ENCODE measurements at regions of chr14 and their contacts with region 1.

Region 1: GRCh38 chr14:105045710-105046326 is 19.4 kb downstream of the GPR132 start:
- DNase-seq: peak; percentile 81
- H3K4me3 ChIP-seq: no peak overlapping the region
- H3K27ac ChIP-seq: no peak overlapping the region
- H3K4me1 ChIP-seq: no peaks in the 10 kb centered on the region
- H3K27me3 ChIP-seq: peaks cover 3 to 9% of the 10 kb centered on the region in 2 experiments
- CTCF ChIP-seq: peak; percentile 100
- POLR2A ChIP-seq: no peak

Region 2: GRCh38 chr14:104895786-104896661 is 149.8 kb before region 1 on chr14:
- CTCF ChIA-PET with region 1: interaction called, 13 read pairs
- POLR2A ChIA-PET with region 1: no interaction called
- dilution Hi-C with region 1: no loop called
- intact Hi-C with region 1: loop called (anchors 1 kb)
- DNase-seq: no peak
- H3K4me3 ChIP-seq: no peak overlapping the region
- H3K27ac ChIP-seq: no peak overlapping the region
- H3K4me1 ChIP-seq: peaks cover 16% of the 10 kb centered on the region
- H3K27me3 ChIP-seq: no peaks in the 10 kb centered on the region
- CTCF ChIP-seq: no peak
- POLR2A ChIP-seq: no peak

Region 3: DNA sequence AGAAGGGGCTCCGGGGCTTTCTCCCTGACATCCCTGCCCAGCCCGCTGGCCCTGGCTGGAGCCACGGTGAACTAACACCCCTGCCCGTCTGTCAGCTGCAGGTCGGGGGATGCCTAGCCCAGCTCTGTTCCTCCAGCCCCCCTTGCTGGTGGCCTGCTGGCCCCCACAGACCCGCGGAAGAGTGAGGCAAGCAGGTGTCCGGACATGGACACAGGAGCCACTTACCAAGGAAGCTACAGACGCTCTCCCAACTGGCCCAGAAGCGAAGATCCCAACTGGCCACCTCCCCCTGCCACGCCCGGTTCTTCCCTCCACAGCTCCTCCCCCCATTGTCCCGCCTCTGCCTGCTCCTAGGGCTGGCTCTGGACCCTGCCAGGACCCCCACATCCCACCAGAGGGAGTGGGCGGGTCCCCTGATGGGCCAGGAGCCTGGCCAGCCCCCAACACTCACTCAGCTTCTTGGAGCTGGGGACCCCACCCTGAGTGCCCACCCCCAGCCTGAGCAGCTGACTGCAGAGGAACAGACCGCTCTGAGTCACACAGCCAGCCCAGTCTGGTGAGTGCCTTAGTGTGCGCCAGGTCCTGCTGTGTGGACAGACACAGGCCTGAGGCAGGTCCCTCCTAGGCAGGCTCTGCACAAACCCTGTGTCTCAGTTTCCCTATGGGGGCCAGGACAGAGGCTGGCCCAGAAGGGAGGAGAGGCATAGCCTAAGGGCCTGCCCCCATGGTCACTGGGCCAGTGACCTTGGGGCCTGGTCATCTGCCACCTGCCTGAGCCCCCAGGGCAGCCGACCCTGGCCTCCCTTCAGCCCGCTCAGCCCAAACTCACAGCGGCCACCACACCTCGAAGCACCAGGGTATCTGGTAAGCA is 75.4 kb before region 1 on chr14:
- CTCF ChIA-PET with region 1: interaction called, 97 read pairs
- POLR2A ChIA-PET with region 1: no interaction called
- dilution Hi-C with region 1: no loop called
- intact Hi-C with region 1: no loop called
- DNase-seq: peak; percentile 87
- H3K4me3 ChIP-seq: peak overlapping the region; percentile 24 to 59 (median 41)
- H3K27ac ChIP-seq: peak overlapping the region; percentile 89
- H3K4me1 ChIP-seq: peaks cover 79% of the 10 kb centered on the region
- H3K27me3 ChIP-seq: no peaks in the 10 kb centered on the region
- CTCF ChIP-seq: no peak
- POLR2A ChIP-seq: peak; percentile 74

Region 4: DNA sequence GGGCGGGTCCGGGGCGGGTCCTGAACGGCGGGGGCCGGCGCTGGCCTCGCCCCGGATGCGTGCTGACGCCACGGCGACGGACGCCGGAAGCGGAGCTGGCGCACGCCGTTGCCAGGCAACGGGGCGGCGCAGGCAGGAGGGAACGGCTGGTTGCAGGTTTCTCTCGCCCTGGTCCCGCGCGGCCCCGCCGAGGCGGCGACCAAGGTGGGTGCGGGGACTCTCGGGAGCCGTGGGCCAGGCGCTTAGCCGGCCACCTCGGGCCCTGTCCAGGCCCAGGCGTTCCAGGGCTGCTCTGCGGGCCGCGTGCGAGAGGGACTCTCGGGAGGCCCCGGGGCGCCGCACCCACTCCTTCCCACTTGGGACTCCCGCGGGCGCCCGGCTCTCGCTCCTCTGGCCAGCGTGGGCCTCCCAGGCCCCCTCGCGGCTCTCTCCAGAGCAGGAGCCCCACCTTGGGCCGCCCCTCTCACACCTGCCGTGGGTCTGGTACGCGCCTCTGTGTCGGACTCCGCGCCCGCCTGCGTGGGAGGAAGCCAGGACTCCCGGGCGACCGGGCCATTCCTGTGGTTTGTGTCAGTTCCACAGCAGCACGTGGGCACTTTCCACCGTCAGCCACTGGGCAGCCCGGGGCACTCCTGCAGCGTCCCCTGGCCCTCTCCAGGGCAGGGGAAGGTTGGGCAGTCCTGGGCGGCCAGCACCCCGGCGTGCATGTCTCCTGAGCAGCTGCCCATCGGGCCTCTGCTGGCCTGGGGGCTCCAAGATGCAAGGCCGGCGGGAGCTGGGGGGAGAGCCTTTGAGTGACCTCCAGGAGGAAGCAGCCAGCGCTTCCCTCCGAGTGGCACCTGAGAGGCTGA is 59.9 kb before region 1 on chr14 and contains the start of gene CLBA1:
- CTCF ChIA-PET with region 1: interaction called, 21 read pairs
- POLR2A ChIA-PET with region 1: no interaction called
- dilution Hi-C with region 1: no loop called
- intact Hi-C with region 1: no loop called
- DNase-seq: peak; percentile 90
- H3K4me3 ChIP-seq: peak within 1 kb of the TSS; percentile 45 to 67 (median 65)
- H3K27ac ChIP-seq: peak within 1 kb of the TSS; percentile 65
- H3K4me1 ChIP-seq: peaks cover 4% of the 10 kb centered on the region
- H3K27me3 ChIP-seq: no peaks in the 10 kb centered on the region
- CTCF ChIP-seq: no peak
- POLR2A ChIP-seq: no peak
- total RNA-seq, gene CLBA1: 5.3 and 5.6 TPM in 2 replicates

Region 5: GRCh38 chr14:105012171-105012985 is 33.4 kb before region 1 on chr14:
- CTCF ChIA-PET with region 1: interaction called, 15 read pairs
- POLR2A ChIA-PET with region 1: no interaction called
- dilution Hi-C with region 1: no loop called
- intact Hi-C with region 1: loop called (anchors 1 kb)
- DNase-seq: no peak
- H3K4me3 ChIP-seq: no peak overlapping the region
- H3K27ac ChIP-seq: no peak overlapping the region
- H3K4me1 ChIP-seq: peaks cover 25% of the 10 kb centered on the region
- H3K27me3 ChIP-seq: no peaks in the 10 kb centered on the region
- CTCF ChIP-seq: peak; percentile 17 to 34
- POLR2A ChIP-seq: no peak

Region 6: GRCh38 chr14:105026803-105027563 is 18.8 kb before region 1 on chr14:
- CTCF ChIA-PET with region 1: interaction called, 7 read pairs
- POLR2A ChIA-PET with region 1: no interaction called
- dilution Hi-C with region 1: no loop called
- intact Hi-C with region 1: loop called (anchors 2 kb)
- DNase-seq: no peak
- H3K4me3 ChIP-seq: no peak overlapping the region
- H3K27ac ChIP-seq: no peak overlapping the region
- H3K4me1 ChIP-seq: peaks cover 38% of the 10 kb centered on the region
- H3K27me3 ChIP-seq: no peaks in the 10 kb centered on the region
- CTCF ChIP-seq: no peak
- POLR2A ChIP-seq: no peak

Region 7: DNA sequence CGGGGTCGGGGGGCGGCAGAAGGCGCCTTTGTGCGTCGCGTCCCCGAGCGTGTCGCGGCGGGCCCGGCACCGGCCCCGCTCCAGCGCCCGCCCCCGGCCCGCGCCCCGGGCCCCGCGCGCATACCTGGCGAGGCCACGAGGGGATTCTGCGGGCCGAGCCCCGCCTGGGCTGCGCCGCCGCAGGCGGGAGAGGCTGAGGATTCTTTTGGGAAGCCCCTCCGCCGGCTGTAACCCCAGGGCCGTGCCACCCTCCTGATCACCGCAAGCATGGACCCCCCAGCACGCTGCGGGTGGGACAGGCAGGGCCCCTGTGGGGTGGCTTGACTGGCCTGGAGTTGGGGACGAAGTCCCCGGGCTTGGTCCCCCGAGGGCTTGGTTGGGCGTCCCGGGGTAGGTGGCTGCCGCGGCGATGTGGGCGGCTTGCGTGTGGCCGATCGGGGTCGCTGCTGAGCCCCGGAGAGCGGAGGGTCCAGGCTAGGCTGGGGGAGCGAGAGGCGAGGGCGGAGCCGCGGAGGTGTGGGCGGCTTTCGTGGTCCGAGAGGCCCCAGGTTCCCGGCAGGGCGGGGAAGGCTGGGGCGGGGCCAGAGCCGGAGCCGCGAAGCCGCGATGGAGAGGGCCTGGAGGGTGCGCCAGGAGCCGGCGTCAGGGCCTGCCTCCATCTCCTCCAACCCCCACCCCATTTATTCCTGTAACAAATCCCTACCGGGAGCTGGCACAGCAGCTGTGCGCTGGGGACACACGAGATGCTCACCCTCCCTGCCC is 47.8 kb after region 1 on chr14:
- CTCF ChIA-PET with region 1: no interaction called
- POLR2A ChIA-PET with region 1: no interaction called
- dilution Hi-C with region 1: no loop called
- intact Hi-C with region 1: no loop called
- DNase-seq: peak; percentile 68
- H3K4me3 ChIP-seq: peak overlapping the region; percentile 43 to 61 (median 59)
- H3K27ac ChIP-seq: peak overlapping the region; percentile 26
- H3K4me1 ChIP-seq: peaks cover 11% of the 10 kb centered on the region
- H3K27me3 ChIP-seq: no peaks in the 10 kb centered on the region
- CTCF ChIP-seq: peak; percentile 48 to 82
- POLR2A ChIP-seq: no peak

Measured in endothelial cell of umbilical vein (primary cell).